B cell (primary cell): ENCODE measurements at regions of chr11 and their contacts with region 1.

Region 1: GRCh38 chr11:111766093-111766833 is at the start of gene PPP2R1B:
- DNase-seq: peak; percentile 88
- ATAC-seq: peak; percentile 97
- H3K4me3 ChIP-seq: peak within 1 kb of the TSS; percentile 74 to 97 (median 90)
- H3K4me3 Mint-ChIP-seq: peak within 1 kb of the TSS; percentile 100
- H3K27ac ChIP-seq: peak within 1 kb of the TSS; percentile 53 to 77
- H3K27ac Mint-ChIP-seq: peak within 1 kb of the TSS; percentile 97
- H3K4me1 ChIP-seq: peaks cover 9 to 16% of the 10 kb centered on the region in 2 donors
- H3K4me1 Mint-ChIP-seq: peaks cover 37% of the 10 kb centered on the region
- H3K27me3 ChIP-seq: no peaks in the 10 kb centered on the region
- H3K27me3 Mint-ChIP-seq: no peaks in the 10 kb centered on the region
- CTCF ChIP-seq: no peak
- total RNA-seq, gene PPP2R1B: 35.6 and 37.0 TPM in 2 replicates

Region 2: DNA sequence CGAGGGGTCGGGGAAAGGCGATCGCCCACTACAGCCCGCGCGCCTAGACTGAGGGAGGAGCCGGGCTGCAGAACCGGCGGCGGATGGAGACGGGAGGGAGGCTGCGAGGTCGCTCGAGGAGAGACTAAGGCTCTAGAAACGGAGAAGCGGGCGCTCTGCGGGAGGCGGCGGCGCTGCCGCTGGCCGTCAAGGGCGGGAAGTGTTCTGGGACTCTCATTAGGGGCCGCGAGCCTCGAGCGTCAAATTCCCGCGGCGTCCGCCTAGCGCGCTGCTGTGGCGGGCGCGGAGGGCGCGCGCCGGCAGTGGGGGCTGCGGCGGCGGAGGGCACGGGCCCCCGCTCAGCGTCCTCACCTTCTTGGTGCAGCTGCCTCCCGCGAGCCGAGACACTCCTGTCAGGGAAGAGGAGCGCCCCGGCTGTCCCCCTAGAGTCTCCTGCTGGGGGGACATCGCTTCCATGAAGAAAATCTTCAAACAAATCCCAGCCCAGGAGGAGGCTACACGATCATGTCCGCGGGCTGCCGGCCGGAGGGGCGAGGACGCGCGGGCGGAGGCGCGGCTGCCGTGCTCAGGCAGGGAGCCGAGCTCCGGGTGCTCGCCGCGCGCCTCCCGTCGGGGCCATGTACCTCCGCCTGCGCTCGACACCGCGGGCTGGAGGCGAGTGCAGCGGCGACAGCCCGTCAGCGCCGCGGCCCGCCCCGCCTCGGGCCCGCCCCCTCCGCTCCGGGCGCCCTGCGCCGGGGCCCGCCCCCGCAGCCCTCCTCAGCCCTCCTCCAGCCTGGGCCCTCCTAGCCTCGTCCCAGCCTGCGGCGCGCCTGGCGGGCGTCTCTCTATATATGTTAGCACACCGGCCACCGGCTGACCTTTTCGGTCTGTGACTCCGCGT is 1054.2 kb before region 1 on chr11 and contains the start of gene ARHGAP20:
- CTCF ChIA-PET with region 1: no interaction called
- POLR2A ChIA-PET with region 1: no interaction called
- intact Hi-C with region 1: loop called (anchors 5 kb)
- DNase-seq: peak; percentile 79
- ATAC-seq: peak; percentile 93
- H3K4me3 ChIP-seq: peak within 1 kb of the TSS; percentile 26 to 86 (median 74)
- H3K4me3 Mint-ChIP-seq: peak within 1 kb of the TSS; percentile 89
- H3K27ac ChIP-seq: peak within 1 kb of the TSS in 1 of 2 donors; percentile 13
- H3K27ac Mint-ChIP-seq: peak within 1 kb of the TSS; percentile 54
- H3K4me1 ChIP-seq: peaks cover 17 to 23% of the 10 kb centered on the region in 2 donors
- H3K4me1 Mint-ChIP-seq: peaks cover 17% of the 10 kb centered on the region
- H3K27me3 ChIP-seq: peaks cover 0 to 41% (median 23%) of the 10 kb centered on the region in 4 experiments
- H3K27me3 Mint-ChIP-seq: peaks cover 47% of the 10 kb centered on the region
- CTCF ChIP-seq: no peak
- total RNA-seq, gene ARHGAP20: 0.58 and 0.91 TPM in 2 replicates

Region 3: GRCh38 chr11:111586388-111586831 is 179.9 kb before region 1 on chr11:
- CTCF ChIA-PET with region 1: interaction called, 10 read pairs
- POLR2A ChIA-PET with region 1: no interaction called
- intact Hi-C with region 1: no loop called
- DNase-seq: peak; percentile 75
- ATAC-seq: peak; percentile 57
- H3K4me3 ChIP-seq: no peak overlapping the region
- H3K4me3 Mint-ChIP-seq: no peak overlapping the region
- H3K27ac ChIP-seq: no peak overlapping the region
- H3K27ac Mint-ChIP-seq: no peak overlapping the region
- H3K4me1 ChIP-seq: no peaks in the 10 kb centered on the region
- H3K4me1 Mint-ChIP-seq: peaks cover 5% of the 10 kb centered on the region
- H3K27me3 ChIP-seq: no peaks in the 10 kb centered on the region
- H3K27me3 Mint-ChIP-seq: no peaks in the 10 kb centered on the region
- CTCF ChIP-seq: peak; percentile 85

Region 4: DNA sequence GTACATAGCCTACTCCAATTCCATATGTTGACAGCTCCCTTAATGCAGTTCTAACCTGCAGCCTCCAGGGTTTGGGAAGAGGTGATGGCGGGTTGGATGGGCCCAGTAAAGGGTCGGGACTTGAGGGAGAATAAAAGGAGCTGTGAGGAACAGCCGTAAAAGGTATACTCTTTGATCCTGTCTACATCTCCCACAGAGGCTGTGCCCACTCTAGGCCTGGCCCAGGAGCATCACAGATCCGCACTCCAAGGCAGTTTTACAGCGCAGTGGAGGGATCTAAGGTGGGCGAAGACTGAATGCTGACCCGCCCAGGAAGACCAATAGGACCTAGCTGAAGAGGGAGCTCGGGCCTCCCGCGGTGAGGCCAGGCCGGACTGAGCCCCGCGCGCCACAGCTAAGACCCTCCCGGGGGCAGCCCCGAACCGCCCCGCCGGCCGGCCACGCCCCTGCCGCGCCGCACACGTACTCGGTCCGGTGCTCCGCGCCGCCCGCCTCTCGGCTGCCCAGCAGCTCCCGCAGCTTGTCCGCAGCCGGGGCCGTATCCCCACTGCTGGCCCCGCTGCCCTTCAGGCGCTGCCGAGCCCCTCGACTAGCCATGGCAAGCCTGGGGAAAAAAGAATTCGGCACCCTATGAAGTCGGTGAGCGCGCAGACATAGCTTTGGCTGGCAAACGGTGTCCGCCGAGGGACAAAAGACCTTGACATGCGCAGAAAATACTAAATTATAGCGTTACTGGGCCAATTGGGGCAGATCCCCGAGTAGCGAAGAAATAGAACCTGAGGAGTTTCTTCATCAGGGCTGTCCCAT is 104.8 kb after region 1 on chr11 and contains the start of gene ALG9:
- CTCF ChIA-PET with region 1: interaction called, 3 read pairs
- POLR2A ChIA-PET with region 1: no interaction called
- intact Hi-C with region 1: loop called (anchors 2 kb)
- DNase-seq: peak; percentile 94
- ATAC-seq: peak; percentile 94
- H3K4me3 ChIP-seq: peak within 1 kb of the TSS; percentile 62 to 81 (median 80)
- H3K4me3 Mint-ChIP-seq: peak within 1 kb of the TSS; percentile 94
- H3K27ac ChIP-seq: peak within 1 kb of the TSS; percentile 72 to 91
- H3K27ac Mint-ChIP-seq: peak within 1 kb of the TSS; percentile 94
- H3K4me1 ChIP-seq: peaks cover 13 to 14% of the 10 kb centered on the region in 2 donors
- H3K4me1 Mint-ChIP-seq: peaks cover 17% of the 10 kb centered on the region
- H3K27me3 ChIP-seq: no peaks in the 10 kb centered on the region
- H3K27me3 Mint-ChIP-seq: no peaks in the 10 kb centered on the region
- CTCF ChIP-seq: no peak
- total RNA-seq, gene ALG9: 23.9 and 29.9 TPM in 2 replicates

Region 5: DNA sequence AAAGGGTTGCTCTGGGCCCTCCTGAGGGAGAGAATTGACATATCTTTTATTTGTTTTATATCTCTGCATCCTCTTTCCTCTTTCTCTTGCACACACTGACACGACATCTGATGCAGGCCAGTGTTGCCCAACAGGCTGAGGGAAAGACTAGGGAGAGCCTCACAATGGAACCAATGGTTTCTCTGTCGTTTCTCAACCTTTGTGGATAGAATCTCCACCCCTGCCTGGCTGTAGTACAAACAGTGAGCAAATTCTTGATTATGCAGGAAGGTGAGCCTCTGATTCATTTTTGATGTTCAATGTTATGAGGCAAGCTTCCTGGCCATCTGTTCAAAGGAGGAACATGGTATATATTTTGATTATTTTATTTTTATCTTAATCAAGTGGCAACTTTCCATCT is 544.2 kb after region 1 on chr11:
- CTCF ChIA-PET with region 1: no interaction called
- POLR2A ChIA-PET with region 1: no interaction called
- intact Hi-C with region 1: no loop called
- DNase-seq: no peak
- ATAC-seq: no peak
- H3K4me3 ChIP-seq: no peak overlapping the region
- H3K4me3 Mint-ChIP-seq: no peak overlapping the region
- H3K27ac ChIP-seq: no peak overlapping the region
- H3K27ac Mint-ChIP-seq: no peak overlapping the region
- H3K4me1 ChIP-seq: no peaks in the 10 kb centered on the region
- H3K4me1 Mint-ChIP-seq: no peaks in the 10 kb centered on the region
- H3K27me3 ChIP-seq: no peaks in the 10 kb centered on the region
- H3K27me3 Mint-ChIP-seq: no peaks in the 10 kb centered on the region
- CTCF ChIP-seq: no peak